Astrocyte of the cerebellum (primary cell): ENCODE measurements at regions of chr16 and their contacts with region 1.

Region 1: DNA sequence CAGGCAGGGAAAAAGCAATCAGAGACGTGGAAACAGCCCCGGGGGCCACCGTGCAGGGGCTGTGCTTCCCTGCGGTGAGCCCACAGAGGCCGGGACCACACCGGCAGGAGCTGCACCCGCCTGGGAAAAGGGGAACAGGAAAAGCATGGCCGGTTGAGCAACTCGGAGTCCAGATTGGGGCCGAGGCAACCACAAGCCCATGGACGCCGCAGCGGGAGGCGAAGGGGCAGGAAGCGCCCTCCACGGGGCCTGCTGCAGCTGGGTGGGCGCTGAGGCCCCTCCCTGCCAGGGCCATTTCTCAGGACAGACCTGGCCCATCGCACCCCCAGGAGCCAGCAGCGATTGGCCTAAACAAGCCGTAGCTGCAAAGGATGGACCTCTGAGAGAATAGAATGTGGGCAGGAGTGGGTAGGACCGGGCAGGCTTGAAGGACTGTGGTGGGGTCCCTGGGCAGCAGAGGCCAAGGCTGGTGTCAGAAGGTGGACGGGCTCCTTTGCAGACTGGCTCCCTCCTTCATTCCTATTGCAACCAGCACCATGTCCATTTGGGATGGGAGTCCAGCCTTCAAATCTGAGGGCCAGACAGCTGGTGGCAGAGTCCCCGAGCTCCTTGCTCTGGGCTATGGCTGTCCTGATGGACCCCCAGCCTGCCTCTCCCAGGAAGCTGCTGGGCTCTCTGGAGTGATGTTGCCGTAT is 30.4 kb downstream of the COX4I1 start:
- DNase-seq: no peak
- H3K4me3 ChIP-seq: no peak overlapping the region
- CTCF ChIP-seq: no peak

Region 2: DNA sequence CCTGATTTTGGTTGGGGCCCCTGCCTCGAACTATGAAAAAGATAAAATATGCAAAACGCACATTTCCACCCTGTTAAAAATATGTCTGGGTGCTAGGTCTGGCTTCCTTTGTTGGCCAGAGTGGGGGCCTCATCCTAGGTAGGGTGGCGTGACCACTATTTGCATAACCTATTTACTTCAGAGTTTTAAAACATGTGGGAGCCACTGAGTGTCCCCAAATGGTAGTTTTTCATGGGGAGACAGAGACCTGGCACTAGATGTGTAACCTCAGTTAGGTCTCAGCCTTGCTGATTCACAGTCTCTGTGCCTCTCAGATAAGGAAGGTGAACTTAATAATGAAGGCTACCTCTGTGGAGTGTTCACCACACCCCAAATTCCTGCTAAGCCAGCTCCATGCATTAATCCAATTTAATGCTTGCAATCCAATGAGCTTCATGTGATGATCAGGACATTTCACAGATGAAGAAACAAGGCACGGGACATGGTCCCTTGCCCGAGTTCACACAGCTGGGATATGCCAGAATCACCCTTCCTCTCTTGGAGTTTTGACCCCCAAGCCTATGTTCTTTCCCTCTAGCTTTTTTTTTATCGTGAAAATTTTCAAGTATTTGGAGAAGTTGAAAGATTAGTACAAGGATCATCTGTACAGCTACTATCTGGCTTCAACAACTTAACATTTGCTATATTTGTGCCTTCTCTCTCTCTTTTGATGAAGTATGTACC is 172.4 kb after region 1 on chr16:
- in situ Hi-C with region 1: loop called (anchors 10 kb)
- DNase-seq: no peak
- H3K4me3 ChIP-seq: no peak overlapping the region
- CTCF ChIP-seq: no peak

Region 3: GRCh38 chr16:86118467-86119307 is 288.8 kb after region 1 on chr16:
- in situ Hi-C with region 1: no loop called
- DNase-seq: no peak
- H3K4me3 ChIP-seq: no peak overlapping the region
- CTCF ChIP-seq: no peak